ENCODE measurements at regions of chr3 and their contacts with region 1.

Region 1: GRCh38 chr3:43769471-43770425 is 79.0 kb downstream of the ABHD5 start:
- DNase-seq: peak; percentile 78
- H3K4me3 Mint-ChIP-seq: no peak overlapping the region
- H3K27ac Mint-ChIP-seq: no peak overlapping the region
- H3K4me1 Mint-ChIP-seq: peaks cover 10% of the 10 kb centered on the region
- H3K27me3 Mint-ChIP-seq: peaks cover 40% of the 10 kb centered on the region

Region 2: DNA sequence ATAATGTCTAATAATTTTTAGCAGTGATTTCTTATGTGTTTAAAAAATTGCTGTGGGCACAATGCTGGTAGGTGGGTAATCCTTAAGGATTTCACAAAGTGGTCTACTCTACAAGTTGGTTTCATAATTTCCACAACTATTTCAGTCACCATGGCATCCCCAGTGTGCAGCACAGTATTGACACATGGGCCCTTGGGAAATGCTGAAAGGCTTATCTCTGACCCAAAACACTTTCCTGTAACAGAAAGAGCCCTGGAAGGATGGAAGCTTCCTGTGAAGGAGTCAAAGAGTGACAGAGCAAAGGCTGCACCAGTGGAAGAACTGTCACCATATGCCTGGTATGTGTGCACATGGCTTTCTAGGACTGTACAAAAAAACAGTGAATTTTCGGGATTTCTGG is 301.6 kb before region 1 on chr3:
- CTCF ChIA-PET with region 1: no interaction called
- DNase-seq: no peak
- H3K4me3 Mint-ChIP-seq: no peak overlapping the region
- H3K27ac Mint-ChIP-seq: no peak overlapping the region
- H3K4me1 Mint-ChIP-seq: no peaks in the 10 kb centered on the region
- H3K27me3 Mint-ChIP-seq: no peaks in the 10 kb centered on the region

Region 3: DNA sequence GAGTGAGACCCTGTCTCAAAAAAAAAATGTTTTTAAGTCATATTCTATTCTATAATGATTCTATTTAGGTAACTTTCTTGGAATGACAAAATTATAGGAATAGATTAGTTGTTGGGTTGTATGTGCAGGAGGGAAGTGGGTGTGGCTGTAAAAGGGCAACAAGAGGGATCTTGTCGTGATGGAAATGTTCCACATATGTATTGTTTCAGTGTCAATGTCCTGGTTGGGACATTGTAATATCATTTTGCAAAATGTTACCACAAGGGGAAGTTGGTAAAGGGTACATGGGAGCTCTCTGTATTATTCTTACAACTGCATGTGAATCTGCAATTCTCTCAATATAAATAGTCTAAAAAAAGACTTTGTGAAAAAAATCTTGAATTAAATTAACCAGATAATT is 93.3 kb before region 1 on chr3:
- CTCF ChIA-PET with region 1: no interaction called
- DNase-seq: no peak
- H3K4me3 Mint-ChIP-seq: no peak overlapping the region
- H3K27ac Mint-ChIP-seq: no peak overlapping the region
- H3K4me1 Mint-ChIP-seq: no peaks in the 10 kb centered on the region
- H3K27me3 Mint-ChIP-seq: peaks cover 4% of the 10 kb centered on the region

Region 4: DNA sequence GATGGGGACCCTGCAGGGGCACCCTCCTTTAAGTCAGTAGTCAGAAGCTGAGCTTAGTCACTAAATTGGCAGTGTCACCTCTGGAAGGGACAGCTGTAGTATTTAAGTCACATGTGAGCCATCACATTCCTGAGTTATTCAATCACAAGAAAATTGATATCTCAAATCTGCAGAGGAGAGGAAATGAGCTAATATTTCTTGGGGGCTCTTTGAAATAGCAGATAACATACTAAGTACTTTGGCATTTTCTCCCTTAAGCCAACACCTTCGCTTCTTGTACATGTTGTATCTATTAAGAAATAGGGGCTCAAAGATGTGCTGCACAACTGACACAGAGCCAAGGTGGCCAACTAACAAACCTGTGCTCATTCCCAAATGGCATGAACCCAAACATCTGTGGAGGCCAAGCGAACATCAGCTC is 16.0 kb before region 1 on chr3:
- CTCF ChIA-PET with region 1: interaction called, 20 read pairs
- DNase-seq: no peak
- H3K4me3 Mint-ChIP-seq: no peak overlapping the region
- H3K27ac Mint-ChIP-seq: no peak overlapping the region
- H3K4me1 Mint-ChIP-seq: peaks cover 34% of the 10 kb centered on the region
- H3K27me3 Mint-ChIP-seq: peaks cover 8% of the 10 kb centered on the region

Region 5: GRCh38 chr3:44198284-44199269 is 428.8 kb after region 1 on chr3:
- CTCF ChIA-PET with region 1: interaction called, 22 read pairs
- DNase-seq: peak; percentile 80
- H3K4me3 Mint-ChIP-seq: no peak overlapping the region
- H3K27ac Mint-ChIP-seq: no peak overlapping the region
- H3K4me1 Mint-ChIP-seq: no peaks in the 10 kb centered on the region
- H3K27me3 Mint-ChIP-seq: peaks cover 15% of the 10 kb centered on the region

Region 6: DNA sequence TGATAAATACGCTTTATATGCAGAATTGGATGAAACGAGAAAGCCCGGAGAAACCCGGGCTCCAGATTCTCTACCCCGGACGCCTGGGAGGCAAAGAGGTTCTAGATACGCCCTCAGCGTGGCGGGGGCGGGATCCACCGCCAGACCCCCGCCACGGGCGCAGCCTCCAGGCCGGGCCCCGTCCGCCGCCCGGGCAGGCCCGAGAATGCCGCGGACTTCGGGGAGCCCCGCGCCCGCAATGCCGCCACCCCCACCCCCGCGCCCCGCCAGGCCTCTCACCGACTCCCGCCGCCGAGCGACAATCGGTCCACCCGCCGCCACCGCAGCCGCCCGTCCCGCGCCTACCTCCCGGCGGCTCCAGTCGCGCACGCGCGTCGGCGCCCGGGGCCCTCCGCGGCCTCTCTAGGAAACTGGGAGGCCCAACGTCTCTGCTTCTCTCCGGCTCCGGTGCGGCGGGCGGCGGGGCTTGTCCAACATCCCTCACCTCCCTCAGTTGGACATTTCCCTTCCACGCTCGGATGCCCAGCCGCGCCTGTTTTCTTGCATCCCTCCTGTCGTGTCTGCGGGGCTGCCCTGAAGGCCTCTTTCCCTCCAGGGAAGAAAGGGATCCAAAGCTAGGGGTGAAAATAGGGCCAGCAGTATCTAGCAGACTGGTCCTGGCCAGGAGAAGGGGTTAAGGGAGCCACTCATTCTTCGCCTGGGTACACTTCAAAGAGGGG is 707.7 kb after region 1 on chr3 and contains the start of gene ZNF445:
- CTCF ChIA-PET with region 1: no interaction called
- DNase-seq: peak; percentile 82
- H3K4me3 Mint-ChIP-seq: peak within 1 kb of the TSS; percentile 92
- H3K27ac Mint-ChIP-seq: peak within 1 kb of the TSS; percentile 90
- H3K4me1 Mint-ChIP-seq: peaks cover 36% of the 10 kb centered on the region
- H3K27me3 Mint-ChIP-seq: no peaks in the 10 kb centered on the region

Measured in activated naive CD4-positive, alpha-beta T cell treated with anti-CD3 and anti-CD28 coated beads, Interleukin-2, amount 10 ng/mL, durations not matched to agents 7 days and 5 days (primary cell).